Common myeloid progenitor, CD34-positive (primary cell): ENCODE measurements at regions of chr19 and their contacts with region 1.

Region 1: GRCh38 chr19:7680606-7681339 is at the start of gene TRAPPC5:
- DNase-seq: peak; percentile 84 to 91 (median 91)
- H3K4me3 ChIP-seq: peak within 1 kb of the TSS; percentile 56 to 98 (median 87)
- H3K27ac ChIP-seq: peak within 1 kb of the TSS; percentile 54 to 87
- H3K4me1 ChIP-seq: peaks cover 0 to 56% (median 51%) of the 10 kb centered on the region in 4 experiments
- H3K27me3 ChIP-seq: no peaks in the 10 kb centered on the region

Region 2: GRCh38 chr19:7562646-7563393 is 118.0 kb before region 1 on chr19:
- CTCF ChIA-PET with region 1: interaction called, 18 read pairs
- POLR2A ChIA-PET with region 1: no interaction called
- DNase-seq: peak in 2 of 3 donors; percentile 35 to 36
- H3K4me3 ChIP-seq: no peak overlapping the region
- H3K27ac ChIP-seq: no peak overlapping the region
- H3K4me1 ChIP-seq: no peaks in the 10 kb centered on the region
- H3K27me3 ChIP-seq: no peaks in the 10 kb centered on the region

Region 3: DNA sequence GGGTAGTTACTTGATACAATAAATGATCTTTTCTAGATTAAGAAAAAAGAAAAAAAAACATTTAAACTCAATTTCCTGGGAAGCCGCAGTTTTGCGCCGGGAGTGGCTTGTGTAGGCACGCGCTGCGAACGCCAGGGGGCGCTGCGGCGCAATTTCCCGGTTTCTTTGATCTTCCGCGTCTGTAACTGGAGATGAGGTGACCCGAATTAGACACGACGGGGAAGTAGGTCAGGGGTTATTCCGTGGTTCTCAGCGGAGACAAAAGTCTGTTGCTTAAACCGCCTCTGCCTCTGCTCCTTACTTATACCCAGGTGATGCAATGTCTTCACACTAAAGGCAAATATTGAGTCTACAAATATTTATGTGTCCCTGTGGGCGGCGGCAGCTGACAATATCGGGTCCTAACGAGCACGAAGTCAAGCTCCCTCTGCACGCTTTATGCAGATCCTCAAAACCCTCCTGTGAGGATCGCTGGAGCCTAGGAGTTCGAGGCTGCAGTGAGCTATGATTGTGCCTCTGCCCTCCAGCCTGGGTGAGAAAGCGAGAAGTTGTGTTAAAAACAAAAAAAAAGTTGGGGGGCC is 28.6 kb before region 1 on chr19:
- CTCF ChIA-PET with region 1: interaction called, 16 read pairs
- POLR2A ChIA-PET with region 1: no interaction called
- DNase-seq: peak; percentile 80 to 90 (median 90)
- H3K4me3 ChIP-seq: peak overlapping the region in 5 of 7 experiments; percentile 21 to 72 (median 40)
- H3K27ac ChIP-seq: no peak overlapping the region
- H3K4me1 ChIP-seq: peaks cover 0 to 26% (median 5%) of the 10 kb centered on the region in 4 experiments
- H3K27me3 ChIP-seq: peaks cover 0 to 4% (median 0%) of the 10 kb centered on the region in 5 experiments

Region 4: GRCh38 chr19:7657131-7657751 is 23.5 kb before region 1 on chr19:
- CTCF ChIA-PET with region 1: interaction called, 16 read pairs
- POLR2A ChIA-PET with region 1: no interaction called
- DNase-seq: peak in 2 of 3 donors; percentile 72 to 81
- H3K4me3 ChIP-seq: no peak overlapping the region
- H3K27ac ChIP-seq: peak overlapping the region in 1 of 2 experiments; percentile 36
- H3K4me1 ChIP-seq: peaks cover 4 to 35% (median 13%) of the 10 kb centered on the region in 4 experiments
- H3K27me3 ChIP-seq: peaks cover 0 to 3% (median 0%) of the 10 kb centered on the region in 5 experiments

Region 5: GRCh38 chr19:7699417-7700401 is 18.9 kb after region 1 on chr19:
- CTCF ChIA-PET with region 1: interaction called, 11 read pairs
- POLR2A ChIA-PET with region 1: no interaction called
- DNase-seq: peak in 2 of 3 donors; percentile 76 to 89
- H3K4me3 ChIP-seq: no peak overlapping the region
- H3K27ac ChIP-seq: no peak overlapping the region
- H3K4me1 ChIP-seq: peaks cover 0 to 23% (median 11%) of the 10 kb centered on the region in 4 experiments
- H3K27me3 ChIP-seq: peaks cover 0 to 6% (median 0%) of the 10 kb centered on the region in 5 experiments

Region 6: DNA sequence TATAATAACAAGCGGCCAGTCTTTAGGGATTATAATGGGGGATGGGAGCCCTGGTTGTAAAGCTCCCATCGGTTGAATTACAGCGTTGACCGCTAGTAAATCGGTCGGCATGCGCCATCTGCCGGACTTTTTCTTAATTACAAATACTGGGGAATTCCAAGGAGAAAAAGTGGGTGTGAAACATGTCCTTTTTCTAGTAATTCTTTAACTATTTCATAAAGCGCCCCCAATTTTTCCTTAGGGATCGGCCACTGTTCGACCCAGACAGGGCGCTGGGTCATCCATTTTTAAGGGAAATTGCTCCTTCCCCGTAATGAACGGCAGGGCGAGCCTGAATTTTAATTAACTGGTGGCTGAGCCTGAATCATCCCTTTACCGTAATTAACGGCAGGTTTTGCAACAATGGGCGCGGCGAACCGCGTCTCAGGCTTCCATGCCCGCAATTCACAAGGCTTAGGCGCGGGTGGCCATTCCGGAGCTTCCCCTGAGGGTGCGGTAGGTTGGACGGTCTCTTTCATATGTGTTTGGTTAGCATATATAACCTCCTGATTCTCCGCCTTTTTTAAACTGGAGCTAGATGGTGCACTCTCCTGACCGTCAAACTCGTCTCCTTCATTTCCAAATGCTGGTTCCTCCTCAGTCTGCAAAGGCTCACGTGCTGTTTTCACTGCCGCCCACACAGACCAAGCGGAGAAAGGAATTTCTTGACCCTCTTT is 119.0 kb after region 1 on chr19:
- CTCF ChIA-PET with region 1: interaction called, 49 read pairs
- POLR2A ChIA-PET with region 1: interaction called, 3 read pairs
- DNase-seq: peak; percentile 50 to 67 (median 66)
- H3K4me3 ChIP-seq: peak overlapping the region in 5 of 7 experiments; percentile 6 to 71 (median 51)
- H3K27ac ChIP-seq: no peak overlapping the region
- H3K4me1 ChIP-seq: peaks cover 0 to 11% (median 7%) of the 10 kb centered on the region in 4 experiments
- H3K27me3 ChIP-seq: peaks cover 0 to 12% (median 4%) of the 10 kb centered on the region in 5 experiments